ENCODE measurements at regions of chr12 and their contacts with region 1.

Region 1: DNA sequence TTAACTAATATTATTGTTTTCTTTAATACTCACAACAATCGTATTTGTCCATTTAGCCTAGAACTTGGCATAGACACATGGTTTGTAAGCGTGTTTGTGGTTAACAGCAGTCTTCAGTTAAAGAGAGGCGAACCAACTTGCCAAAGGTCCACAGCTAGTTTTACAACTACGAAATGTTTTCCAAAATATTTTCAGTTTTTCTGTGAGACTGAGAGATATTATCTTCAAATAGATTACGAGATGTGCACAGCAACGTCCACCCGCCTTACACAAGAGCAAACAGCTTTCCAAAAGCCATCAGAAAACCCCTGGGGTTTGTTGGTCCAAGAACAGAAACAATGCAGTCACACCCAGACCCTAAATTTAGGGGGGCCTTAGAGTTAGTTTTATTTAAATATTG is 58.6 kb upstream of the RASSF3 start:
- DNase-seq: no peak
- ATAC-seq: peak; percentile 35

Region 2: DNA sequence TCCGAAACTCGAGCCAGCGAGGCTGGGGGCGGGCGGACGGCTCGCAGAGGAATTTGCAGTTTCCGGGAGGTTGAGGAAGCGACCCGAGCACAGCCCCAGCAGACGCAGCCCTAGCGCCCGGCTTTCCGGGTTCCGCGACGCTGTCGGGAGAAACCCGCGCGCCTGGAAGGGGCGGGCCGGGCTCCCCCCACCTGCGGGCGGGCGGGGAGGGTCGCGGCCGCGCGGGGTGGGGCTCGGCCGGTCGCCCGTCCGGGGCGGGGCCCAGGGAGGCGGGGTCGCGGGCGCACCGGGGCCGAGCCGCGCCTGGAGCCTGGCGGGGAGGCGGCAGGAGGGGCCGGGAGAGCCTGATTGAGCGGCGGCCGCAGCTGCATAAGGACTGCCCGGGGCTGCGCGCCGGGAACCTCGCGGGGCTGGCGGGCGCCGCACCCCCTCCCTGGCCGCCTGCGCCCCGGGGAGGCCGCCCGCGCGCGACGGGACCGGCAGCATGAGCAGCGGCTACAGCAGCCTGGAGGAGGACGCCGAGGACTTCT is 58.5 kb after region 1 on chr12 and contains the start of gene RASSF3:
- intact Hi-C with region 1: loop called (anchors 5 kb)
- DNase-seq: peak; percentile 88
- ATAC-seq: peak; percentile 86
- total RNA-seq, gene RASSF3: 117 TPM

Region 3: DNA sequence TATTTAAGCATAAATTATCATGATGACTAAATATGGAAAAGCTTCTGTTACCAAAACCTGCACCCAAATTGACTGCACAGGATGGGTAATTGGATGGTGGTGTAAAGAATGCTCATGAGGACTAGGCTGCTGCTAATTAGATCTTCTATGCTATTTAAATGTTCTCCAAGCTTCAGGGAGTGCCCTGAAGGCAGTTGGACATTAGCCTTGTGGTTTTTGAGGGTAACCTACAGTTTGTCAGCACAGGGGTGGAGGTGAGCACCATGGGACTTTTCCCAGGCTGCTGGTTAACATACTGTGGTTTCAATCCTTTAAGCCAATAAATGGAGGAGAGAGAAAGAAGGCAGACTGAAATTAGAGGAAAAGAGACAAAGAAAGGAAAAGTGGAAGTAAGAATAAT is 424.4 kb after region 1 on chr12:
- intact Hi-C with region 1: no loop called
- DNase-seq: no peak
- ATAC-seq: no peak

Measured in Right ventricle myocardium superior (tissue), 1 donor.